Heart right ventricle (tissue), 16 donors: ENCODE measurements at regions of chr1 and their contacts with region 1.

Region 1: GRCh38 chr1:43828574-43828973 is 105.0 kb upstream of the ARTN start:
- DNase-seq: no peak
- ATAC-seq: no peak
- H3K4me3 ChIP-seq: no peak overlapping the region
- H3K27ac ChIP-seq: no peak overlapping the region
- H3K4me1 ChIP-seq: peaks cover 0 to 42% (median 10%) of the 10 kb centered on the region in 9 donors
- H3K27me3 ChIP-seq: no peaks in the 10 kb centered on the region
- CTCF ChIP-seq: no peak

Region 2: DNA sequence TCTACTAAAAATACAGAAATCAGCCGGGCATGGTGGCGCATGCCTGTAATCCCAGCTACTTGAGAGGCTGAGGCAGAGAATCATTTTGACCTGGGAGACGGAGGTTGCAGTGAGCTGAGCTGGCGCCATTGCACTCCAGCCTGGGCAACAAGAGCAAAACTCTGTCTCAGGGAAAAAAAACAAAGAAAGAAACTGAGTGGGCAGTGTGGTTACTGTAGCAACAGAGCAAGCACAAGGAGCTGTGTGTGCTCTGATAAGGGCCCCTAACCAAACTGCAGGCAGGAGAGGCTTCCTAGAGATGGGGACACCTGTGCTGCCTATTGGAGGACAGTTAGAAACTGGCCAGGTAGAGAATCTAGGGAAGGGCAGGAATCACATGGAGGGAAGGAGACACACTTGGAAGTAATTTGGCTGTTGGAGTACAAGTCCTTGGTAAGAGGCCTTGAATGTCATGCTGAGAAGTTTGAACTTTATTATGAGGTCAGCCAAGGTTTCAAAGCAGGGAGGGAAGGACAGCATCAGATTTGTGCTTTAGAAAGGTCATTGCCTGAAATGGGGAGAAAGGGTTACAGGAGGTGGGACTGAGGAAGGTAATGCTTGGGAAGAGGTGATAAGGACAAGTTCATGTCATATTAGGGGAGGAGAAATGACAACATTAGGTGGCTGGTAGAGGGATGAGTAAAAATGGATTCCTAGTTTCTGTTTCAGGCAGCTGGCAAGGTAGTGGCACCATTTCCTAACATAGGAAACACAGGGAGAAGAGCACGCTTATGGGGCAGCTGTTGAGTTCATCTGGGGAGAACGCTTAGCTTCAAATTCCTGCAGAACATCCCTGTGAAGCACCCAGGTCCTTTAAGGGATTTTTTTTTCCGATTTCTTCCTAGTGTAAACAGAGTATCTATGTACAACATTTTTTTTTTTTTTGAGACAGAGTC is 35.8 kb after region 1 on chr1:
- intact Hi-C with region 1: loop called in 1 of 10 experiments (anchors 2 kb)
- DNase-seq: no peak
- ATAC-seq: peak in 1 of 8 donors; percentile 14
- H3K4me3 ChIP-seq: no peak overlapping the region
- H3K27ac ChIP-seq: peak overlapping the region in 1 of 10 donors; percentile 1
- H3K4me1 ChIP-seq: peaks cover 0 to 66% (median 31%) of the 10 kb centered on the region in 9 donors
- H3K27me3 ChIP-seq: no peaks in the 10 kb centered on the region
- CTCF ChIP-seq: no peak